ENCODE measurements at regions of chr20 and their contacts with region 1.

Region 1: GRCh38 chr20:4299773-4300172 is 284.4 kb upstream of the RNF24 start:
- DNase-seq: no peak
- H3K4me3 ChIP-seq: no peak overlapping the region
- H3K27ac ChIP-seq: no peak overlapping the region
- H3K4me1 ChIP-seq: no peaks in the 10 kb centered on the region
- H3K27me3 ChIP-seq: no peaks in the 10 kb centered on the region
- CTCF ChIP-seq: no peak
- POLR2A ChIP-seq: no peak

Region 2: GRCh38 chr20:4369798-4370124 is 70.0 kb after region 1 on chr20:
- intact Hi-C with region 1: loop called (anchors 10 kb)
- DNase-seq: no peak
- H3K4me3 ChIP-seq: no peak overlapping the region
- H3K27ac ChIP-seq: no peak overlapping the region
- H3K4me1 ChIP-seq: no peaks in the 10 kb centered on the region
- H3K27me3 ChIP-seq: no peaks in the 10 kb centered on the region
- CTCF ChIP-seq: no peak
- POLR2A ChIP-seq: no peak

Measured in thyroid gland (tissue), 4 donors.